Psoas muscle (tissue), 8 donors: ENCODE measurements at regions of chr3 and their contacts with region 1.

Region 1: DNA sequence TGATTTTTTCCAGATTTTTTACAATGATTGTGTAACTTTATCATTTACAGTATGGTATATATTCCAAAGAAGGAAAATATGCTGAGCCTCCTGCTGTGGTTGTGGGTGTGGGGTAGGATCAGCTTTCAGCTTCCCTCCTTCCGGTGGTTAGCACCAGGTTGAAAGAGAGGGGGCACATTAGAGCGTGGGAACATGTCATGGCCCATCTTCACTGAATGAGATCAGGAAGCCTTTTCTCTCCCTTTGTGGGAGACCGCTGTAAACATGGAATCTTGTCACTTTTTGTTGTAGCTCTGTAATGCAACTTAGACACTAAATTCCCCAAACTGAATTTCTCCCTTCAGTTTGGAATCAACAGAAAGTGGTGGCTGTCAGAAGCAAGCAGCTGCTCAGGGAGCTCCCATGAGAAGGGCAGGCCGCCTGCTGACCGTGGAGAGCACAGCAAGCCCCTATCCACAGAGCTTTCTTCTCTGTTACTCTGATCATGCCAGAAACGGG is 86.7 kb upstream of the LIMD1 start:
- DNase-seq: peak; percentile 35 to 73
- ATAC-seq: peak in 3 of 4 donors; percentile 43 to 54 (median 46)
- H3K4me3 ChIP-seq: no peak overlapping the region
- H3K27ac ChIP-seq: no peak overlapping the region
- H3K4me1 ChIP-seq: no peaks in the 10 kb centered on the region
- H3K27me3 ChIP-seq: no peaks in the 10 kb centered on the region
- CTCF ChIP-seq: no peak

Region 2: GRCh38 chr3:45443459-45443858 is 64.4 kb before region 1 on chr3:
- intact Hi-C with region 1: no loop called
- DNase-seq: no peak
- ATAC-seq: no peak
- H3K4me3 ChIP-seq: no peak overlapping the region
- H3K27ac ChIP-seq: no peak overlapping the region
- H3K4me1 ChIP-seq: no peaks in the 10 kb centered on the region
- H3K27me3 ChIP-seq: no peaks in the 10 kb centered on the region
- CTCF ChIP-seq: no peak

Region 3: DNA sequence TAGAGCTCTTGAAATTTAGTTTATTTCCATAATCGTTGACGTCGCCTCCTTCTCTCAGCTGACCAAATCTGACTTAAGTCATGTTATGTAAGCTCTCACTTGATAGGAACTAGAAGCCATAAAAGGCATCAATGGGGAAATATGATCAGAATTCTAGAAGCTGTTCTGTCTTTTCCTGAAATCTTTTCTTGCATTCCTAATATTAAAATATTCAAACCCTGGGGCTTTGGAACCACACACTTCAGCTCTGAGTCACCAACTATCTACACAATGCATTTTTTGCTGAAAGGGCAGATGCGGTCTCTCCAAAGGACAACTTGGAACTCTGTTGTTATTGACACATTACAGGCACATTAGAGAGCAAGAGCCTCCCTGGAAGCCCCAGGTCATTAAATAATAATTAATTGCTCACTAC is 28.2 kb before region 1 on chr3:
- intact Hi-C with region 1: no loop called
- DNase-seq: no peak
- ATAC-seq: no peak
- H3K4me3 ChIP-seq: no peak overlapping the region
- H3K27ac ChIP-seq: no peak overlapping the region
- H3K4me1 ChIP-seq: no peaks in the 10 kb centered on the region
- H3K27me3 ChIP-seq: no peaks in the 10 kb centered on the region
- CTCF ChIP-seq: no peak

Region 4: GRCh38 chr3:45656575-45657363 is 148.9 kb after region 1 on chr3:
- intact Hi-C with region 1: loop called (anchors 1 to 2 kb)
- DNase-seq: peak; percentile 93
- ATAC-seq: peak; percentile 86 to 90 (median 88)
- H3K4me3 ChIP-seq: no peak overlapping the region
- H3K27ac ChIP-seq: peak overlapping the region; percentile 66
- H3K4me1 ChIP-seq: peaks cover 59% of the 10 kb centered on the region
- H3K27me3 ChIP-seq: no peaks in the 10 kb centered on the region
- CTCF ChIP-seq: peak; percentile 95